HepG2 (cell line): ENCODE measurements at regions of chr19 and their contacts with region 1.

Region 1: DNA sequence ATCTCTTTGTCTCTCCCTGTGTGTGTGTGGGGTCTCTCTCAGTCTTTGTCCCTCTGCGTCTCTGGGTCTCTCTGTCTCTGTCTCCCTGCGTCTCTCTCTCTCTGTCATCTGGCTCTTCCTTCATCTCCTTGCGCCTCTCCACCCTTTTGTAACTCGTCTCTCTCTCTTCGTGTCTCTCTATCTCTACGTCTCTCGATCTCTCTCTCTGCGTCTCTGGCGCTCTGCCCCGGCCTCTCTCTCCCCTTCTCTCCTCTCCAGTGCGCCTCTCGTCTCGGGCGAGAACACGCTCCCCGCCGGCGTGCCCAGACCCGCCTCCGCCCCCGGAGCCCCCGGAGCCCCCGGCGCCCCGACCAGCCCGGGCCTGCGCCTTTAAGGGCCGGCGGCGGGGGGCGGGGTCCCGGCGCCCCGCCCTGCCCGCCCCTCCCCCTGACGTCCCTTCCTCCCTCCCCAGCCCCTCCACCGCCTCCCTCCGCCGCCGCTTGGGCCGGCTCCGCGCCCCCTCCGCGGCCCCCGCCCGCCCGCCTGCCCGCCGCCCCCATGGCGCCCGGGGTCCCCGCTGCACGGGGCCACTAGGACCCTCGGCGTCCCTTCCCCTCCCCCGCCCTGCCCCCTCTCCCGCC is at the start of gene MARK4:
- DNase-seq: no peak
- ATAC-seq: peak; percentile 50
- H3K4me3 ChIP-seq: peak within 1 kb of the TSS; percentile 80 to 91 (median 91)
- H3K27ac ChIP-seq: peak within 1 kb of the TSS; percentile 61
- H3K4me1 ChIP-seq: peaks cover 71% of the 10 kb centered on the region
- H3K27me3 ChIP-seq: no peaks in the 10 kb centered on the region; a peak in 1 of 5 replicates
- CTCF ChIP-seq: no peak
- EP300 ChIP-seq: no peak
- POLR2A ChIP-seq: peak in 1 of 2 experiments; percentile 55; a peak in 2 of 4 replicates
- RAD21 ChIP-seq: no peak
- total RNA-seq, gene MARK4: 7.0 and 7.6 TPM in 2 replicates

Region 2: GRCh38 chr19:45200568-45200994 is 50.4 kb before region 1 on chr19:
- CTCF ChIA-PET with region 1: interaction called, 4 read pairs
- POLR2A ChIA-PET with region 1: no interaction called
- in situ Hi-C with region 1: no loop called
- intact Hi-C with region 1: loop called (anchors 2 kb)
- DNase-seq: peak; percentile 62
- ATAC-seq: peak; percentile 86
- H3K4me3 ChIP-seq: no peak overlapping the region
- H3K27ac ChIP-seq: no peak overlapping the region
- H3K4me1 ChIP-seq: no peaks in the 10 kb centered on the region
- H3K27me3 ChIP-seq: peaks cover 0 to 16% of the 10 kb centered on the region in 2 experiments; a peak in 2 of 5 replicates
- CTCF ChIP-seq: peak; percentile 89
- EP300 ChIP-seq: no peak
- POLR2A ChIP-seq: no peak
- RAD21 ChIP-seq: peak; percentile 84

Region 3: GRCh38 chr19:45264781-45265317 is 13.9 kb after region 1 on chr19:
- CTCF ChIA-PET with region 1: no interaction called
- POLR2A ChIA-PET with region 1: no interaction called
- in situ Hi-C with region 1: no loop called
- intact Hi-C with region 1: no loop called
- DNase-seq: no peak
- ATAC-seq: no peak
- H3K4me3 ChIP-seq: no peak overlapping the region
- H3K27ac ChIP-seq: no peak overlapping the region
- H3K4me1 ChIP-seq: peaks cover 20% of the 10 kb centered on the region
- H3K27me3 ChIP-seq: no peaks in the 10 kb centered on the region
- CTCF ChIP-seq: no peak
- EP300 ChIP-seq: no peak
- POLR2A ChIP-seq: no peak
- RAD21 ChIP-seq: no peak